ENCODE measurements at regions of chr1 and their contacts with region 1.

Region 1: GRCh38 chr1:177948336-177948972 is 21.4 kb downstream of the SEC16B start:
- DNase-seq: no peak
- H3K4me3 ChIP-seq: no peak overlapping the region
- H3K27ac ChIP-seq: no peak overlapping the region
- H3K4me1 ChIP-seq: peaks cover 7% of the 10 kb centered on the region
- H3K27me3 ChIP-seq: no peaks in the 10 kb centered on the region
- CTCF ChIP-seq: peak; percentile 83 to 96 (median 86)

Region 2: DNA sequence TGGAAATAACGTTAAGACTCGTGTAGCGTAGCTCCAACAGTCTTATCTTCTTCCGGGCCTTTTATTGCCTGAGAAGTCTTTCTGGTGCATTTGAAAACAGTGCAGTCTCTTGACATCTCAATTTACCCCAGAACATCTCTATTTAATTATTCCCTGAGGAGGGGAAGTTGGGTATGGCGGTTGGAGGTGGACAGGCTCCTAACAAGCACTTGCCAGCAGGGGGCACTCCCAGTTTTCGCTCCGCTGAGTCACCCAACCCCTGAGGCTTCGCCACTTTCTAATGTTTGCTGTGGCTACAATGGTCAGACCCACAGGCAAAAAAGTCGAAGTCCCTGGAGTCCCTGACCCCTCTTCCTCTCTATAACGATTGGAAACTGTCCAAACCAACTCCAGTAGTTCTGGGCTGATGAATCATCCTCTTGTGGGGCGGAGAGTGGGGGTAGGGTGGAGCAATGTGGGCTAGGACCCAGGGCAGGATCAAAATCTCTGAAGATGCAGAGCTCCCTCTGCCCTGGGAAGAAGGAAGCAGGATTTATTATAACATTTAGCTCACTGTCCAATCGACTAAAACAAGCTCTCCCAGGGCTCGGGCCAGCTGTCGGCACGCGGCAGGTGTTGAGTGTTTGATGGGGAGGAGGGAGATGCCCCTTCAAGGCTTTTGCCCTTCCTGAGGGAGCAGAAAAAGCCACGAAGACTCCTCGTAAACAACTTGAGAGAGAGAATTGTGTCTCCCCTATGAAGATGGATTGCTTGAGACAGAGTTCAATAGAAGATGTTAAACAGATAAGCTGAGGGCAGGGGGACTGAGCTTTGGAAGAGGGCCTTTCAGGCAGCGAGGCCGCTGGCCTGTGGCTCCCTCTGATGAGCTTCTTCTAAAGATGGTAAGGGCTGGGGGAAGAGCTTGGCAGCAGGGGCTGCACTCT is 692.0 kb before region 1 on chr1:
- dilution Hi-C with region 1: loop called (anchors 25 kb)
- DNase-seq: peak; percentile 93
- H3K4me3 ChIP-seq: peak overlapping the region in 1 of 3 experiments; percentile 31
- H3K27ac ChIP-seq: peak overlapping the region; percentile 75
- H3K4me1 ChIP-seq: peaks cover 23% of the 10 kb centered on the region
- H3K27me3 ChIP-seq: no peaks in the 10 kb centered on the region
- CTCF ChIP-seq: peak; percentile 67 to 70 (median 69)

Measured in keratinocyte (primary cell).